Esophagus muscularis mucosa (tissue), 4 donors: ENCODE measurements at regions of chr17 and their contacts with region 1.

Region 1: GRCh38 chr17:35747540-35748017 is 5.5 kb downstream of the GAS2L2 start:
- DNase-seq: no peak
- H3K4me3 ChIP-seq: no peak overlapping the region
- H3K27ac ChIP-seq: no peak overlapping the region
- H3K4me1 ChIP-seq: peaks cover 3 to 38% (median 30%) of the 10 kb centered on the region in 4 donors
- H3K27me3 ChIP-seq: peaks cover 8 to 93% (median 18%) of the 10 kb centered on the region in 4 donors
- CTCF ChIP-seq: peak; percentile 86 to 94 (median 89)
- EP300 ChIP-seq: no peak
- POLR2A ChIP-seq: no peak

Region 2: DNA sequence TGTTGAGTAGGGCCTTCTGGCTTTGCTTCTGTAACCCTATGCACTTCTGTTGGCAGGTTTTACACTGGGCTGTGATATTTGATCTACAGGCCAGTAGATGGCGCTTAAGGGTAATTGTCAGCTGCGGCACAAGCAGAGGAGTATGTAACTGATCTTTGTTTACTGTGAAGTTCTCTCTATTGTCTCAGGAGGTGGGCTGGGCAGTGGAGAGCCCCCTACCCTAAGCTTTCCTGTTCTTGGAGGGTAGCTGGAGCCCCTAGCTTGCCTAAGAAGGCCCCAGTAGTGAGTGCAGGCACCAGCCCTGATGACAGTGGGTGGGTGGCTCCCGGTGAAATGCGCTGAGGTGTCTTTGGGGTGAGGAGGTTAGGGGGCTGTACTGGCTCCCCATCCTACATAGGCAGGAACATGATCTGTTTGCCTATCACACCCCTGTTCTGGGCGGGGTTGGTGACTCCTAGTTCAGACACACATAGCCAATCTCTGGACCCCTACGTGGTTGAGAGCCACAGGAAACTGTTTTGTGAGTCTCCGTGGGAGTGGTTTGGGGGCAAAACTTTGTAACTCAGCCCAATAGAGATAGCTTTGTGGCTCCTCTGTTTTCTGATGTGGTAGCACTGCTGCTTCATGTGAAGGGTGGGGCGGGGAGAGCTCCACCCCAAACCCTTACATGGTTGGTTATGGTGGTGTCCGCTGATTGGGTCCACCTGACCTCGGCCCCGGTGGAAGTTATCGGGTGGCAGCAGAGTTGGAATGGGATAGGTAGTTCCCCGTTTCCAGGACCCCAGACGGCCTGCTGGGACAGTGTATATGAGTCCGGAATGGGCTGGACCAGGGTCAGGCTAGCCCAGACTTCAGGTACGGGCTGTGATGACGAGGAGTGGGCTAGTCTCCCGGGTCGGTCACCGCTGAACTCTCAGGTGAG is 434.5 kb before region 1 on chr17:
- intact Hi-C with region 1: loop called (anchors 5 kb)
- DNase-seq: no peak
- H3K4me3 ChIP-seq: peak overlapping the region; percentile 41 to 51 (median 44)
- H3K27ac ChIP-seq: peak overlapping the region; percentile 2 to 47 (median 34)
- H3K4me1 ChIP-seq: peaks cover 28 to 35% (median 31%) of the 10 kb centered on the region in 4 donors
- H3K27me3 ChIP-seq: peaks cover 0 to 18% (median 0%) of the 10 kb centered on the region in 4 donors
- CTCF ChIP-seq: peak; percentile 65 to 84 (median 81)
- EP300 ChIP-seq: no peak
- POLR2A ChIP-seq: no peak

Region 3: GRCh38 chr17:35612924-35613521 is 134.6 kb before region 1 on chr17:
- intact Hi-C with region 1: loop called (anchors 5 kb)
- DNase-seq: no peak
- H3K4me3 ChIP-seq: no peak overlapping the region
- H3K27ac ChIP-seq: no peak overlapping the region
- H3K4me1 ChIP-seq: peaks cover 9 to 71% (median 53%) of the 10 kb centered on the region in 4 donors
- H3K27me3 ChIP-seq: no peaks in the 10 kb centered on the region
- CTCF ChIP-seq: peak; percentile 36 to 58 (median 44)
- EP300 ChIP-seq: no peak
- POLR2A ChIP-seq: no peak

Region 4: GRCh38 chr17:35660902-35661301 is 86.7 kb before region 1 on chr17:
- intact Hi-C with region 1: loop called (anchors 5 kb)
- DNase-seq: no peak
- H3K4me3 ChIP-seq: no peak overlapping the region
- H3K27ac ChIP-seq: no peak overlapping the region
- H3K4me1 ChIP-seq: no peaks in the 10 kb centered on the region
- H3K27me3 ChIP-seq: no peaks in the 10 kb centered on the region
- CTCF ChIP-seq: no peak
- EP300 ChIP-seq: no peak
- POLR2A ChIP-seq: no peak

Region 5: GRCh38 chr17:35692512-35693210 is 54.9 kb before region 1 on chr17:
- intact Hi-C with region 1: loop called (anchors 5 kb)
- DNase-seq: no peak
- H3K4me3 ChIP-seq: no peak overlapping the region
- H3K27ac ChIP-seq: no peak overlapping the region
- H3K4me1 ChIP-seq: peaks cover 0 to 11% (median 0%) of the 10 kb centered on the region in 4 donors
- H3K27me3 ChIP-seq: no peaks in the 10 kb centered on the region
- CTCF ChIP-seq: no peak
- EP300 ChIP-seq: no peak
- POLR2A ChIP-seq: no peak

Region 6: DNA sequence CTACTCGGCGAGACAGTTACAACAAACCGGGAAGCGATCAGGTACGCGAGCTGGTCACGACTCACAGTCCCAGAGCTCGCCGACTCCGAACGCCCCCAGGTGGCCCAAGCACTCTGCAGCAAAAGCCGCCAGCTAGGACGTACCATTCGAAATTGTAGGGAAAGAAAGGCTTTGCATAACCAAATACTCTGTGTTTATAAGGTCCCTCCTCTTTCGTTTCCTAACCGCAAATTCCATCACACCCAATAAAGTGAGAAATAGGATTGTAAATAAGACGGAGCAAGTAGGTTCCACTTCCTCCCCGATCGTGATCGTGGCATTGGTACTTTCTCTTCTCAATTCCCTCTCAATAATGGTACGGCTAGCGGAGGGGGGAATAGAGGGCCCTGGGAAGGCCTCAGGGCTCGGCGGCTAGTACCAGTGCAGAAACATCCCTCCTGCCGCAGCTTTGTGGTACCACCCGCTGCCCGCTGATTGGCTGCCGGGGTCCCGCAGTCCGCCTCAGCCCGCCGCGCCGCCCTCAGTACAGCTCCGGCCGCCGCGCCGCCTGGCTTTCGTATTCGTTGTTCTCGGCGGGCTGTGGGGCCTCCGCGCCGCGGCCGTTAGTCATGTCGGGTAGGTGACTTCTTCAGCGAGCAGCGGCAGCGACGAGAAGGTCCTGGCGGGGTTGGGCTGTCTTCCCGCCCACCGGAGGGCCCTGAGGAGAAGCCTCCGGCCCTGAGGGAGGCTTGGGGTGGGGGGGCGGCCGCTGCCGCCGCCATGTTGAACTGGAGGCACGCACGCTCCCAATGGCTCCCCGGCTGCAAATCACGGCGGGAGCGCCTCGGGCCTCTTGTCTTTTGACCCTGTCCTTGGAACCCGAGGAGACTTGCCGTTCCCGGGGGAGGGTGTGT is 61.6 kb after region 1 on chr17 and contains the start of gene TAF15:
- intact Hi-C with region 1: no loop called
- DNase-seq: peak; percentile 98
- H3K4me3 ChIP-seq: peak within 1 kb of the TSS; percentile 89 to 93 (median 91)
- H3K27ac ChIP-seq: peak within 1 kb of the TSS; percentile 92 to 96 (median 95)
- H3K4me1 ChIP-seq: peaks cover 26 to 62% (median 61%) of the 10 kb centered on the region in 4 donors
- H3K27me3 ChIP-seq: no peaks in the 10 kb centered on the region
- CTCF ChIP-seq: peak; percentile 67 to 82 (median 75)
- EP300 ChIP-seq: no peak
- POLR2A ChIP-seq: peak; percentile 98
- total RNA-seq, gene TAF15: 93.8 to 140 (median 122) TPM

Region 7: DNA sequence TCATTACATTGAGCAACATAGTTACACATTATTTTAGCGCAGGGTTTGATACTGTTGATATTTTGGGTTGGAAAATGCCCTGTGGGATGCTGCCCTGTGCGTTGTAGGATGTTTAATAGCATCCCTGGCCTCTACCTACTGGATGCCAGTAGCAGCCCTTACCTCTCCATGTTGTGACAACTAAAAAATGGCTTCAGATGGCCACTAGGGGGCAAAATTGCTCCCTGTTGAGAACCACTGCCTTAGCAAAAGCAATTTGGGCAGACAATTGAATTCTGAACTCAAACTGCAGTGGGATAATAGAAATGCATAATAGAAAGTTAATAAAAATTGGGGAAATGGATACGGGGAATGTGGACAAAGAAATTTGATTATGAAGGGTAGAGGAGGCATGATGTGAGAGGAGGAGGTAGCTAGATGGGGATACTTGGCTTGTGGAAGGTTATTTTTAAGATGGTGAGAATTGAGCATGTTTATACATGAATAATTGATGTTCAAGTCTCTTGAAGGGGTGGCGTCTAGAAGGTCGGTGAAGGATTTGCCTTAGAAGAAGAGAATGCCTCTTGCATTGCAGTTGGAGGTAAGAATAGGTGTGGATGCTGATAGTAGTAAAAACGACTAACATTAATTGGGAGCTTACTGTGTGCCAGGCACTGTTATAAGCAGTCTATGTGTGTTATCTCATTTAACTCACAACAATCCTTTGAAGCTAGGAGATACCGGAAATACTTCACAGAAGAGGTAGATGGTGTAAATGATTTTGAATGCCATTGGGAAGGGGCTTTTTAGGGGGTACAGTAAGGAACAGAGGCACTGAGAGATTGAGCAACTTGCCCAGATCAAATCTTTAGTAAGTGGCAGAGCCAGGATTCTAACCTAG is 102.1 kb after region 1 on chr17:
- intact Hi-C with region 1: no loop called
- DNase-seq: no peak
- H3K4me3 ChIP-seq: no peak overlapping the region
- H3K27ac ChIP-seq: no peak overlapping the region
- H3K4me1 ChIP-seq: peaks cover 0 to 3% (median 0%) of the 10 kb centered on the region in 4 donors
- H3K27me3 ChIP-seq: no peaks in the 10 kb centered on the region
- CTCF ChIP-seq: peak in 2 of 3 experiments; percentile 42 to 67
- EP300 ChIP-seq: no peak
- POLR2A ChIP-seq: no peak

Region 8: GRCh38 chr17:36117505-36118382 is 370.2 kb after region 1 on chr17:
- intact Hi-C with region 1: no loop called
- DNase-seq: no peak
- H3K4me3 ChIP-seq: no peak overlapping the region
- H3K27ac ChIP-seq: no peak overlapping the region
- H3K4me1 ChIP-seq: no peaks in the 10 kb centered on the region
- H3K27me3 ChIP-seq: peaks cover 0 to 7% (median 0%) of the 10 kb centered on the region in 4 donors
- CTCF ChIP-seq: no peak
- EP300 ChIP-seq: no peak
- POLR2A ChIP-seq: no peak